ENCODE measurements at regions of chr12 and their contacts with region 1.

Region 1: DNA sequence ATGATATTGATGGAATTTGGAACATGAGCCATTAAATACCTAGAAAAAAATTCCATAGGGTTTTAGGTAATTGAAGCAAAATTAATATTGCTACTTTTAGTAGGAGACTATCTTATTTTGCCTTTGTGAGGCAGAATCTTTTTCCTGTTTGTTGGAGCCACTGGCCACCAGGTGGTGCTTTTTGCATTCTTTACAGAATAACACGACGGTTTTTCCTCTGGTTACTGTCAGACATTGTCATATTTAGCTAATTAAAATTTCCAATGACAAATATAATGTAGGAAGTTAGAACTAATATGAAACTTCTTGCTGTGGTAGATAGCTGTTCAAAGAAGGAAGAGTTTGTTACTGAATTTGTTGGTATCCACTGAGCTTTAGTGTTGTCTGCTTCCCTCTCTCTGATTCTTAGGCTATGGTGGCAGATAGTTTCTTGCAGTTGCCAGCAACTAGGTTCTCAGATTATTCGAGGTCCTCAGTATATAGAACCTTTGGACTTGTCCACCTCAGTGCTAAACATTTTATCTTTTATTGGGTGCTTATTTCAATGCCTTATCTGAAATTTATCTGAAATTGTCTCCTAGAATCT is 25.7 kb downstream of the RAB21 start:
- DNase-seq: peak; percentile 58 to 78 (median 70)
- H3K4me3 ChIP-seq: peak overlapping the region in 1 of 7 experiments; percentile 16
- H3K27ac ChIP-seq: no peak overlapping the region
- H3K4me1 ChIP-seq: peaks cover 0 to 13% (median 8%) of the 10 kb centered on the region in 4 experiments
- H3K27me3 ChIP-seq: no peaks in the 10 kb centered on the region

Region 2: DNA sequence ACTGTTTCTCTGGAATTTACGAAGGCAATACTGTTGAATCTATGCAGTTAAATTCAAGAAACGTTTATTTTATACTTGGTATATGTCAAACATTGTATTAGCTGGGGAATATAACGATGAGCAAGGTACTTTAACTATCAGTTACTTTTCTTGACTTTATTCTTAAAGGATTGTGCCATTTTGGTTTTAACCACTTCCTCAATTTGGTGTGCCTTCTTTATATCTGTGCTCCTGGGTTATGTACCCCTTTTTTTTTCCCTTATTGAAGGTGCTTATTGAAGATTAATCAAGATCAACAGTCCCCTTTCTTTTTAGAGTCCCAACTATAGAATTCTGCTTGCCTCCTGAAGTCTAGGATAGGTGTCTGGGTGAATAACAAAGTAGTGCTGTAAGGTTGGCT is 19.9 kb before region 1 on chr12:
- CTCF ChIA-PET with region 1: interaction called, 16 read pairs
- POLR2A ChIA-PET with region 1: no interaction called
- DNase-seq: peak in 2 of 3 donors; percentile 31 to 48
- H3K4me3 ChIP-seq: no peak overlapping the region
- H3K27ac ChIP-seq: no peak overlapping the region
- H3K4me1 ChIP-seq: peaks cover 3 to 15% (median 7%) of the 10 kb centered on the region in 4 experiments
- H3K27me3 ChIP-seq: no peaks in the 10 kb centered on the region

Region 3: GRCh38 chr12:71791473-71792150 is 11.3 kb after region 1 on chr12:
- CTCF ChIA-PET with region 1: interaction called, 20 read pairs
- POLR2A ChIA-PET with region 1: no interaction called
- DNase-seq: no peak
- H3K4me3 ChIP-seq: peak overlapping the region in 1 of 7 experiments; percentile 4
- H3K27ac ChIP-seq: no peak overlapping the region
- H3K4me1 ChIP-seq: peaks cover 16 to 64% (median 35%) of the 10 kb centered on the region in 4 experiments
- H3K27me3 ChIP-seq: no peaks in the 10 kb centered on the region

Region 4: GRCh38 chr12:71840231-71840847 is 60.0 kb after region 1 on chr12:
- CTCF ChIA-PET with region 1: interaction called, 28 read pairs
- POLR2A ChIA-PET with region 1: no interaction called
- DNase-seq: peak; percentile 41 to 79 (median 61)
- H3K4me3 ChIP-seq: peak overlapping the region; percentile 58 to 97 (median 92)
- H3K27ac ChIP-seq: peak overlapping the region; percentile 99
- H3K4me1 ChIP-seq: peaks cover 12 to 43% (median 31%) of the 10 kb centered on the region in 4 experiments
- H3K27me3 ChIP-seq: no peaks in the 10 kb centered on the region

Region 5: GRCh38 chr12:71846322-71846940 is 66.1 kb after region 1 on chr12:
- CTCF ChIA-PET with region 1: interaction called, 28 read pairs
- POLR2A ChIA-PET with region 1: interaction called, 3 read pairs
- DNase-seq: peak; percentile 61 to 73 (median 73)
- H3K4me3 ChIP-seq: no peak overlapping the region
- H3K27ac ChIP-seq: peak overlapping the region in 1 of 2 experiments; percentile 1
- H3K4me1 ChIP-seq: peaks cover 0 to 29% (median 12%) of the 10 kb centered on the region in 4 experiments
- H3K27me3 ChIP-seq: no peaks in the 10 kb centered on the region

Region 6: GRCh38 chr12:71938728-71939385 is 158.5 kb after region 1 on chr12 and contains the start of gene TPH2:
- CTCF ChIA-PET with region 1: interaction called, 41 read pairs
- POLR2A ChIA-PET with region 1: no interaction called
- DNase-seq: peak; percentile 81 to 92 (median 90)
- H3K4me3 ChIP-seq: no peak within 1 kb of the TSS
- H3K27ac ChIP-seq: no peak within 1 kb of the TSS
- H3K4me1 ChIP-seq: no peaks in the 10 kb centered on the region
- H3K27me3 ChIP-seq: peaks cover 0 to 29% (median 5%) of the 10 kb centered on the region in 5 experiments